ENCODE measurements at regions of chr2 and their contacts with region 1.

Region 1: GRCh38 chr2:9984217-9984739 is 32.8 kb downstream of the GRHL1 start:
- DNase-seq: no peak
- H3K4me3 ChIP-seq: no peak overlapping the region
- H3K27ac ChIP-seq: peak overlapping the region in 1 of 59 donors; percentile 54
- H3K27me3 ChIP-seq: no peaks in the 10 kb centered on the region
- CTCF ChIP-seq: peak; percentile 63 to 94 (median 86)

Region 2: DNA sequence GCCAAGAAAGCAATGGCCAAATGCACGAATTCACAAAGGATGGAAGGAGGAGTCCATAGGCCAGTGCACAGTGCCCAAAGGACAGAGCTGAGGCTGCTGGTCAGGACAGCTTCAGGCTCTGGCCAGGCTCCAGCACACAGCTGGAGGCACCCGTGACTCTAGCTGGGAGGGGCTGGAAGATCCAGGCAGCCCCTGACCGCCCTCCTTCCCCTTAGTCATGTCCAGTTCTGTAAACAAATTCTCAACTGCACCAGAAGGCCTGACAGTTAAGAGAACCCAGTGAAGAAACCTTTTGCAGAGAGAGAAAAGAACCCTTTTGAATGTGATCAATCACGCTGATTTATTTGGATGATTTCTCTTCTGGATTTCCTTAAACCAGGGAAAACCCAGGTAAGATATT is 345.7 kb before region 1 on chr2:
- intact Hi-C with region 1: no loop called
- DNase-seq: peak in 9 of 10 donors; percentile 83 to 93 (median 91)
- H3K4me3 ChIP-seq: peak overlapping the region in 50 of 59 donors; percentile 1 to 60 (median 28)
- H3K27ac ChIP-seq: peak overlapping the region; percentile 50 to 99 (median 95)
- H3K27me3 ChIP-seq: no peaks in the 10 kb centered on the region
- CTCF ChIP-seq: peak in 8 of 56 donors; percentile 6 to 22 (median 18)

Region 3: DNA sequence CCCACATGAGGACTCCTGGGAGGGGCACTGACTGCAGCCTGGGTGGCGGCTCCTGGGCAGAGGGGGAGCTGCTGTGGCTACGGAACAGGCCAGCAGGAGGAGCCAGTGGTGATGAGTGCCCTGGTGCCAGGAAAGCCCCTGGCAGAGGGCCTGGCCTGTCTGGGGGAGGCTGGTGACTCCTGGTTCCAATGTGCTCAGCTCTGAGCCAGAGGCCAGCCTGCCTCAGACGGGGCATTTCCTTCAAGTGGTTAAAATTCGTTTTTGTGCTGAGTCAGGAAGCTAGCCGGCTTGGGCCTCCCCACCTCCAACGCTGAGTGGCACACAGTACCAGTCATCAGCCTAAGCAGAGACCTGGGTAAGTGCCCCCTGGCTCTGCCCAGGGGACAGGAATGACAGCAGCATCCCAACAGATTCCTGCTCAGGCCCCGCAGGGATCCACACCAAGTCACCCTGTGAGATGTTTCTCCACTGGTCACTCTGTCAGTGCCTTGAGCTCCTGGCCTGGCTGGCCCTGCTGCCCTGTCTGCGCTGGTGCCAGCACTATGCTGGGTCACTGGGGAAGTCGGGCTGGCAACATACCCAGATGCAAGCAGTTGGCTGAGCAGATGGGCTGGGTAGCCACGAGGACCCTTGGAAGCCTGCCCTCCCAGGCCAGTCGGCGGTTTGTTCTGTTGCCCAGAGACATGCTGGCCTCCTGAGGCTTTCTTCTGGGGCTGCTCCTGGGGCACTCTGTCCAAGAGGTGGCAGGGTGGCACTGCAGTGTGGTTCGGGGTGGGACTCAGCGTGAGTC is 52.0 kb after region 1 on chr2:
- intact Hi-C with region 1: loop called in 1 of 2 experiments (anchors 5 kb)
- DNase-seq: peak; percentile 74 to 95 (median 86)
- H3K4me3 ChIP-seq: peak overlapping the region in 14 of 59 donors; percentile 1 to 38 (median 18)
- H3K27ac ChIP-seq: peak overlapping the region in 58 of 59 donors; percentile 14 to 95 (median 82)
- H3K27me3 ChIP-seq: no peaks in the 10 kb centered on the region
- CTCF ChIP-seq: peak; percentile 12 to 75 (median 61)

Region 4: DNA sequence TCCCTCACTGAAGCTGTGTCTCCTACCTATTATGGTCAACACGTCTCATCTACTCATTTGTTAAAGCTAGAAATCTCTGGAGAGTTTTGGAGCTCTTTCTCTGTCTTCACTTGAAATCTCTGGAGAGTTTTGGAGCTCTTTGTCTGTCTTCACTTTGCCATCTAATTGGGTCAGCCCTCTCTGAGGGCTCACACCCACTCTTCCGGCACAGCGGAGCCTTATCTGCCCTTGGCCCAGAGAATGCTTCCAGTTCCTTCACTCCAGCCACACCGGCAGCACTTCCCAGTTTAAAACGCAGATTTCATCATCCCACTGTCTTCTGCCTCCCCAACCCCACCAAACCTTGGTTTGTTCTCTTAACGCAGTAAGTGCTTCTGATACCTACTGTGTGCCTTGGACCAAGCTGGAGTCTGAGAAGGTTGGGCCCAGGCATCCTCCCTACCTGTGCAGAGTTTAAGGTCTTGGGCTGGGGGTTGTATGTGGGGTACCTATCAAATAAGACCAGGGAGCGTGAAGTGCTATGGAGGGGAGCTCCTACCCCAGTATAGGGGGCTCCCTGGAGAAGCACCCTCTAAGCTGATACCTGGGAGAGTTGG is 323.4 kb after region 1 on chr2:
- intact Hi-C with region 1: no loop called
- DNase-seq: no peak
- H3K4me3 ChIP-seq: no peak overlapping the region
- H3K27ac ChIP-seq: no peak overlapping the region
- H3K27me3 ChIP-seq: no peaks in the 10 kb centered on the region
- CTCF ChIP-seq: no peak

Region 5: DNA sequence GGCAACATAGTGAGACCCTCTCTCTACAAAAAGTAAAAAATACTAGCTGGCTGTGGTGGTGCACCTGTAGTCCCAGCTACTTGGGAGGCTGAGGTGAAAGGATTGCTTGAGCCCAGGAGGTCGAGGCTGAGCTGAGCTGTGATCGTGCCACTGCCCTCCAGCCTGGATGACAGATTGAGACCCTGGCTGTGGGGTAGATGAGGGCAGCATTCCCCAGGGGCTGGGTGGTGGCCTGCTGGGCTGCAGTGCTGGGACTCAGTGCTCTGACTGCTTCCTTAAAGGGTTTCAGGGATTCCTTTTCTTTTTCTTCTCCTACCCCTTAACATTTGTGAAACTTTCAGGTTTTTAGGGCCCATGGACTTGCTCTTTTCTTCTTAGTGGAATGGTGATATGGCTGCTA is 745.4 kb after region 1 on chr2:
- intact Hi-C with region 1: no loop called
- DNase-seq: no peak
- H3K4me3 ChIP-seq: no peak overlapping the region
- H3K27ac ChIP-seq: no peak overlapping the region
- H3K27me3 ChIP-seq: peaks cover 0 to 21% (median 3%) of the 10 kb centered on the region in 45 donors
- CTCF ChIP-seq: no peak